ENCODE measurements at regions of chr5 and their contacts with region 1.

Region 1: GRCh38 chr5:42994246-42995151 is 45.6 kb downstream of the ANXA2R start:
- DNase-seq: peak; percentile 94
- ATAC-seq: peak; percentile 61
- H3K4me3 Mint-ChIP-seq: peak overlapping the region; percentile 94
- H3K27ac Mint-ChIP-seq: peak overlapping the region; percentile 100
- H3K4me1 Mint-ChIP-seq: peaks cover 16% of the 10 kb centered on the region
- H3K27me3 Mint-ChIP-seq: no peaks in the 10 kb centered on the region

Region 2: DNA sequence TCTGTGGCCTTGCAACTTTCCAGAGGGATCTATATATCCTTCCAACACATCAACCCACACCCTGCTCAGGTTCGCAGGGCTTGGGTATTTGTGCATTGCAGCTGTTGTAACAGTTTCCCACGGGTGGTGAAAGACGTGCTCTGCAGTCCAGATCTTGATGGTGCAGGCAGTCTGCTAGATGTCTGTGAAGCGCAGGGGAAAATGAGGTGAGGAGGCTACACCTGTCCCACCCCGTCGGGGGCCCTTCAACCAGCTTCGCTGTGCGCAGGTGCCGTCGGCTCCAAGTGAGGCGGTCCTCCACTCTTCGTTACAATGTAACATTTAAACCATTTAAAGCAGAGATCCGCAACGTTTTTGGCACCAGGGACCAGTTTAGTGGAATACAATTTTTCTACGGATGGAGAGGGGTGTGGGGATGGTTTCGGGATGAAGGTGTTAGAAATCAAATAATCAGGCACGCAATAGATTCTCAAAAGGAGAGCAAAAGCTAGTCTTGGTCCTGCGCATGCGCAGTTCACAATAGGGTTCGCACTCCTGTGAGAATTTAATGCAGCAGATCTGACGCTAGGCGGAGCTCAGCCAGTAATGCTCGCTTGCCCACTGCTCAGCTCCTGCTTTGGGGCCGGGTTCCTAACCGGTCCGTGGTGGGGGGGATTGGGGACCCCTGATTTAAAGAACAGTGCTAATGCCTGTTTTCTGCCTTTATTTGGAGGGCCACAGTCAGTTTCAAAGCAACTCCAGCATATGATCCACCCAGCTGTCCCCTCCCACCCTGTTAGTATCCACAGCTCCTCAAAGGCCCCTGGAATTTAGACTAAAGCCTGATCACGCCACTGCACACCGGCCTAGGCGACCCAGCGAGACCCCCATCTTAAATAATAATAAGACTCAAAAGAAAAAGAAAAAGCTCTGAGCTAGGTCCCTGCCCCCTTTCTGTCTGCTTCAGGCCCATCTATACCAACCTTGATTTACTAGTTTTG is 85.7 kb before region 1 on chr5:
- CTCF ChIA-PET with region 1: interaction called, 16 read pairs
- DNase-seq: peak; percentile 94
- ATAC-seq: peak; percentile 95
- H3K4me3 Mint-ChIP-seq: peak overlapping the region; percentile 90
- H3K27ac Mint-ChIP-seq: peak overlapping the region; percentile 79
- H3K4me1 Mint-ChIP-seq: peaks cover 17% of the 10 kb centered on the region
- H3K27me3 Mint-ChIP-seq: peaks cover 30% of the 10 kb centered on the region

Region 3: GRCh38 chr5:42950440-42951292 is 43.8 kb before region 1 on chr5:
- CTCF ChIA-PET with region 1: interaction called, 65 read pairs
- DNase-seq: peak; percentile 85
- ATAC-seq: peak; percentile 60
- H3K4me3 Mint-ChIP-seq: peak overlapping the region; percentile 83
- H3K27ac Mint-ChIP-seq: peak overlapping the region; percentile 99
- H3K4me1 Mint-ChIP-seq: peaks cover 33% of the 10 kb centered on the region
- H3K27me3 Mint-ChIP-seq: no peaks in the 10 kb centered on the region

Region 4: DNA sequence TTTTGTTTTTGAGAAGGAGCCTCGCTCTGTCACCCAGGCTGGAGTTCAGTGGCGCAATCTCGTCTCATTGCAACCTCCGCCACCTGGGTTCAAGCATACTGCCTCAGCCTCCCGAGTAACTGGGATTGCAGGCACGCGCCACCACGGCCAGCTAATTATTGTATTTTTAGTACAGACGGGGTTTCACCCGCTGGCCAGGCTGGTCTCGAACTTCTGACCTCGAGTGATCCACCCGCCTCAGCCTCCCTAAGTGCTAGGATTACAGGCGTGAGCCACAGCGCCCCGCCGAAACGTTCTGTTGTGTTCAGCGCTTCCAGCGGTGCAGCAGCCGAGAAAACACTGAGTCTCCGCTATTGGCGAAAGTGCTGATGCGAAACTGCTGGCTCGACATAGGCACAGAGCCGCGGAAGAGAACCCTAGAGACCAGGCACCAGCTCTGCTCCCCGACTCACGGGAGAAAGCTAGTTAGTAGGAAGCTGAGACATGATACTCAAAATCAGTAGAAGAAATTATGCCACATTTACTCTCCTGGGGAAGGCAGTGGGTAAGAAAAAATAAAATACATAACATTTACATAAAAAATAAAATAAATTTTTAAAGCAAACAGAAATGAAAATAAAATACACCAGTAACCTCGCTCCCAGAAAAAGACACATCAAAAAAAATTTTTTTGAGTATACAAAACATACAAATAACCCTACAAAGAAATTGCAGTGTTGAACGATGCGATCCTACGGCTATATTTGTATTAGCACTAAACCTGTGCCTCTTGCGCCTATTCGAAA is 14.1 kb after region 1 on chr5:
- CTCF ChIA-PET with region 1: interaction called, 99 read pairs
- DNase-seq: peak; percentile 95
- ATAC-seq: peak; percentile 65
- H3K4me3 Mint-ChIP-seq: peak overlapping the region; percentile 90
- H3K27ac Mint-ChIP-seq: peak overlapping the region; percentile 97
- H3K4me1 Mint-ChIP-seq: peaks cover 37% of the 10 kb centered on the region
- H3K27me3 Mint-ChIP-seq: peaks cover 2% of the 10 kb centered on the region

Region 5: DNA sequence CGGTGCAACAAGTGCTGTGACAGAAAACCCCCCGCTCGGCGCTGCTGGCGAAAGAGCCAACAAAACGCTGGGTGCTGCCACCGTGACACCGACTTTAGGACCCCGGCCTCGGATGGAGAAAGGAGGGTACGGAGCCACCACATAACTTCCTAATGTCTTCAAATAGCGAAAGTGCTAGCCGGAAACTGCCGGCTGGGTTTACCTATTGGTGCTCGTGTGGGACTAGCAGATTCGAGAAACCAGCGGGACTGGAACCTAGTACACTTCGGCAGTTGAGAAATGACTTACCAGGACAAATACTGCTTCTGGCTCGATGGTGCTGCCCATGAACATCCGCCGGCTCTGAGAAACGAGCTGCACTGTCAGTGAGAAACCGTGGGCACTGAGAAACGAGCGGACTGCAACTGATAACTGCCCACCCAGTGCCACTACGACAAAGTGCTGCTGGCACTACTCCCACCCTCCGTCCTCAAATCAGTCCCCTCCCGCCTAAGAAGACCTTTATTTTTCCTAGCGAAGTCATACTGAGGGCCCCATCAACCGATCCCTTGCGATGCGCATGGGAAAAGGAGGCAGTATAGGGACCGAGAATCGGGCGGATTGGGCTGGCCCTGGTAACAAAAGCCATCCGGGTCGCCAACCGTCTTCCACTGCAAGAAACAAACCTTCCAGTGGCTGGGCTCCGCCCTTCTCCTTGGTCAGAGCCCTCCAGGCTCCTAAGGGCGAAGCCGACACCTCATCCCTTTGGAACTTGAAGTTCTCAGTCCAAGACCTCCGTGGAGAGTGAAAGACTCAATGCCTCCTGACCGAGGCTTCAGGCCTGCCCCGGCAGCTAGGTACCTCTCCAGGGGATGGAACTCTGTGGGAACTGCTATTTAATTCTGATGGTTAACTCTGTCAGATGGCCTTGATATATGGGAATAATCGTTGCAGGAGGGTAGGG is 72.6 kb after region 1 on chr5:
- CTCF ChIA-PET with region 1: interaction called, 12 read pairs
- DNase-seq: peak; percentile 93
- ATAC-seq: peak; percentile 63
- H3K4me3 Mint-ChIP-seq: peak overlapping the region; percentile 99
- H3K27ac Mint-ChIP-seq: peak overlapping the region; percentile 97
- H3K4me1 Mint-ChIP-seq: peaks cover 41% of the 10 kb centered on the region
- H3K27me3 Mint-ChIP-seq: no peaks in the 10 kb centered on the region

Region 6: DNA sequence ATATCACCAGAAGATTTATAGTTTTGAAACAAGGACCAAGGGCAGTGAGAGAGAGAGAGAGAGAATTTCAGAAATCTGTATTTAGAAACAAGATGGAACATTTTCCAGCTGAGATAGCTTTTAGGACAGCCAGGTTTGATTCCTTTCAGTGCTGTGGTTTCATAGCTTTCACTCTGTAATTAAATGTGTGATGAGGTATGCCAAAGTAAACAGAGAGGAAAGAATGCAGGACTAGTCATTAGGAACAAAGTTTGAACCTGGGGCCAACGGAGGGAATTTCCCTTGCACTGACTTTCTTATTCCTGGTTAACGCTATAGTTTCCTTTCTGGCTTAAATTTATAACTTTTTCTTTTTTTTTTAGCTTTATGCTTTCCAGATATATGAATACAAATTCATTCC is 427.6 kb after region 1 on chr5:
- CTCF ChIA-PET with region 1: no interaction called
- DNase-seq: no peak
- ATAC-seq: no peak
- H3K4me3 Mint-ChIP-seq: no peak overlapping the region
- H3K27ac Mint-ChIP-seq: no peak overlapping the region
- H3K4me1 Mint-ChIP-seq: no peaks in the 10 kb centered on the region
- H3K27me3 Mint-ChIP-seq: no peaks in the 10 kb centered on the region